Heart left ventricle (tissue), 16 donors: ENCODE measurements at regions of chr19 and their contacts with region 1.

Region 1: DNA sequence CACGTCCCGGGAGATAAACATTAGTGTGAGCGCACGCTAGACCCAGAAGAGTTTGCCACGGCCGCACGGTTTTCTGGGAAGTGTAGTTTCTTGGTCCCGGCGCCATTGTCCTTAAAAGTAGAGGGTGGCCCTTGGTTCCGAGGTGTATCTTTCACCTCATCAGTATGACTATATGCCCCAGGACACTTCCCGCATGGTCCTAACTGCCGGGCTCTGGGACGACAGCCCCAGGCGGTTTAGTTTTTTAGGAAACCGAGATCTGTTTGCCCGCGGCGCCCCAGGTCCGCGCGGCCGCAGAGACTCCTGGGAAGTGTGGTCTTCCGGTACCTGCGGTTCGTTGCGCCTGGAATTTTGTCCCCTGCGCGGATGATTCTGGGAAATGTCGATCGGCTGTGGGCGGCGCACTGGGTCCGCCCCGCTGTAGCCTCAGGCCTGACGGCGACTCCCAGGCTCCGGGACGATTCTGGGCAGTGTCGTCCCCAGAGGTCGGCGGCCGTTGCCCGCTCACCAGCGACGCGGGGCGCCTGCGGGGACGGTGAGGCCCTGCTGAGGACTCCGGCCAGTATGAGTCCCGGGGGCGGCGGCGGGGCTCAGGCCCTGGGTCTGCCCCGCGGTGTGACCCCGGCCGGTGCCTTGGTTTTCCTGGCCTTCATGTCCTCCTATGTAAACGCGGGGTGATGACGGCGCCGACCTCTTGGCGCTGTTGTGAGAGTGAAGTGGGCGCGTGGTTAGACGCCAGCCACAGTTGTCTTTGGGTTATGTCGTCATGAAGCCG is at the start of gene ZNF181:
- DNase-seq: peak; percentile 92 to 94 (median 92)
- ATAC-seq: peak; percentile 93 to 96 (median 94)
- H3K4me3 ChIP-seq: peak within 1 kb of the TSS; percentile 66 to 96 (median 84)
- H3K27ac ChIP-seq: peak within 1 kb of the TSS; percentile 94 to 99 (median 98)
- H3K4me1 ChIP-seq: peaks cover 4 to 31% (median 25%) of the 10 kb centered on the region in 12 donors
- H3K27me3 ChIP-seq: no peaks in the 10 kb centered on the region
- CTCF ChIP-seq: peak in 5 of 12 donors; percentile 7 to 13 (median 11)
- POLR2A ChIP-seq: peak in 1 of 2 donors; percentile 61
- total RNA-seq, gene ZNF181: 14.4 to 46.6 (median 18.8) TPM

Region 2: GRCh38 chr19:34677386-34678084 is 56.5 kb before region 1 on chr19 and contains the start of gene ZNF302:
- intact Hi-C with region 1: loop called in 7 of 10 experiments (anchors 2 to 5 kb)
- DNase-seq: peak; percentile 98
- ATAC-seq: peak; percentile 99
- H3K4me3 ChIP-seq: peak within 1 kb of the TSS; percentile 62 to 95 (median 79)
- H3K27ac ChIP-seq: peak within 1 kb of the TSS; percentile 93 to 100 (median 98)
- H3K4me1 ChIP-seq: peaks cover 0 to 35% (median 16%) of the 10 kb centered on the region in 12 donors
- H3K27me3 ChIP-seq: no peaks in the 10 kb centered on the region
- CTCF ChIP-seq: no peak
- POLR2A ChIP-seq: peak in 1 of 2 donors; percentile 75
- total RNA-seq, gene ZNF302: 24.3 to 37.2 (median 33.0) TPM

Region 3: DNA sequence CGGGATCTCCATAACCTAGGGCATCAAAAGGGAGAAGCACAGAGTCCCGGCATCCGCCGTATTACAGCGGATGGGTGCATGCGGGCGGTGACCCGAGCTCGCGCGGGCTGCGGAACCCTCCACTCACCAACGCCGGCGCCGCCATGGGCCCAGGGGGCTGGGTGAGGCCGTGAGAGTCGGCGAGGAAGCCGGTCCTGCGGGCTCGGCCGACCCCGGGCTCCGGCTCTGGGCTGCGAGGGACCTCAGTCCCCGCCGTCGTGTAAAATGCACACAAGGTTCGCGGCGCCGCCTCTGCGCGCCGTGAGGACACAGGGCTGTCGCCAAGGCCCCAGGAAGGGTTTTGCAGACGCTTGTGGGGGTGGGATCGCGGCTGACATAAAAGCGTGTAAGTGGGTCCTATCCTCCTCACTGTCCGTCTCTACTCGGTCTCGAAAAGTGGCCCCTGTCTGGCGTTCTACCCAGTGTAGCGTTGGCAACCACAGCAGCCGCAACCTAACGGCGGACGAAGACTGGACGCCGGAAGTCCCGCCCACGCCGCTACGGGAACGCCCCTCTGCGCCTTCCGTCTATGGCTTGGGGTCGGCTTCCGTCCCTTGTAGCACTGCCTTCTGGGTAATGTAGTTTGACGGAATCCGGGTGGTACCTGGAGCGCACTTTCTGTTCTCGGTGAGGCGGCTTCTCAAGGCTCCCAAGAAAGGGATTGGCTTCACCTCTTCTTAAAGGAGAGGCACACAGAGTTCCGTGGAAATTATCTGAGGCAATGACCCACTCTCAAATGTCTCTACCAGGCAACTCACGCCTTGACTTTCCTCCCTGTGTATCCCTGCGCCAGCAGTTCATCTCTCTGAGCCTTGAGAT is 38.9 kb after region 1 on chr19 and contains the start of gene ZNF599:
- intact Hi-C with region 1: loop called in 5 of 10 experiments (anchors 1 to 5 kb)
- DNase-seq: peak; percentile 92 to 95 (median 94)
- ATAC-seq: peak; percentile 98 to 100 (median 100)
- H3K4me3 ChIP-seq: peak within 1 kb of the TSS; percentile 50 to 95 (median 79)
- H3K27ac ChIP-seq: peak within 1 kb of the TSS; percentile 28 to 89 (median 80)
- H3K4me1 ChIP-seq: peaks cover 0 to 14% (median 9%) of the 10 kb centered on the region in 12 donors
- H3K27me3 ChIP-seq: no peaks in the 10 kb centered on the region
- CTCF ChIP-seq: no peak
- POLR2A ChIP-seq: peak in 1 of 2 donors; percentile 77
- total RNA-seq, gene ZNF599: 3.0 to 5.6 (median 3.6) TPM

Region 4: GRCh38 chr19:34926685-34927375 is 192.8 kb after region 1 on chr19 and contains the start of gene ZNF30:
- intact Hi-C with region 1: loop called in 5 of 10 experiments (anchors 1 to 10 kb)
- DNase-seq: peak; percentile 92 to 96 (median 96)
- ATAC-seq: peak; percentile 98 to 100 (median 100)
- H3K4me3 ChIP-seq: peak within 1 kb of the TSS; percentile 41 to 86 (median 64)
- H3K27ac ChIP-seq: peak within 1 kb of the TSS in 11 of 12 donors; percentile 69 to 96 (median 78)
- H3K4me1 ChIP-seq: peaks cover 0 to 15% (median 8%) of the 10 kb centered on the region in 12 donors
- H3K27me3 ChIP-seq: no peaks in the 10 kb centered on the region
- CTCF ChIP-seq: peak in 2 of 12 donors; percentile 7 to 12
- POLR2A ChIP-seq: peak in 1 of 2 donors; percentile 69
- total RNA-seq, gene ZNF30: 0.95 to 13.4 (median 2.8) TPM

Region 5: GRCh38 chr19:34943861-34944573 is 210.0 kb after region 1 on chr19:
- intact Hi-C with region 1: no loop called
- DNase-seq: no peak
- ATAC-seq: no peak
- H3K4me3 ChIP-seq: no peak overlapping the region
- H3K27ac ChIP-seq: no peak overlapping the region
- H3K4me1 ChIP-seq: no peaks in the 10 kb centered on the region
- H3K27me3 ChIP-seq: no peaks in the 10 kb centered on the region
- CTCF ChIP-seq: no peak
- POLR2A ChIP-seq: no peak